ENCODE measurements at regions of chr17 and their contacts with region 1.

Region 1: DNA sequence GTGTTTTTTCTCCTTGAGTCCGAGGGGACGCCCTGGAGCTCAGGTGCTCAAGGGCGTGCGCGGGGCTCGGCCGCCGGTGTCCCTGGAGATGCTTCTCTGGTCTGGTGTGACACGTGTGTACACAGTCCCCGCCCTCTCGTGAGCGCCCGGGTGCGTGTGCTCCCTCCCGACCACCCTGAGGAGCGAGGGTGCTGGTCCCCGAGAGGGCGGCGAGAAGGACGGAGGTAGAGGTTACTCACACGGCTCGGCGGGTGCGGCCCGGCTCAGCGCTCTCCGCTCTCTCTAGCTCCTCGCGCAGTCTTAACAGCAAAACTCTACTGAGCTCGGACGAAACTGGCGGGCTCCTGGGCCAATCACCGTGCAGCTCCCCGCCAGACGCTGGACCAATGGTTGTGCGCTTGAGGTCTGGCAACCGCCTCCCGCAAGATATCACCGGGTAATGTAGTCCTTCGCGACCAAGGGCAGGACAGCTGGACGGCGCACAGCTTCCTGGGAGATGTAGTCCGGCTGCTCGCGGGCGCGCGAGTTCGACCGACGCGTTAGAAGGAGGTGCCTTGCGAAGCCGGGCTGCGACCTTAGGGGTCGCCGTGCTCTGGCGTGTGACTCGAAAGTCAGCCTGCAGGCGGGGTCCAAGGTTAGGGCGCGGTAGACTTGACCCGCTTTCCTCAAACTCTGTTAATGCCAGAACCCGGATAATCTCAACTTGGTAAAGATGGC is at the start of gene SLC25A19:
- DNase-seq: peak; percentile 90 to 99 (median 96)
- ATAC-seq: peak; percentile 88
- H3K4me3 ChIP-seq: peak within 1 kb of the TSS; percentile 70 to 77
- H3K4me3 Mint-ChIP-seq: peak within 1 kb of the TSS; percentile 97
- H3K27ac ChIP-seq: peak within 1 kb of the TSS; percentile 95 to 97
- H3K27ac Mint-ChIP-seq: peak within 1 kb of the TSS; percentile 100
- H3K4me1 ChIP-seq: peaks cover 16% of the 10 kb centered on the region
- H3K4me1 Mint-ChIP-seq: peaks cover 16% of the 10 kb centered on the region
- H3K27me3 ChIP-seq: no peaks in the 10 kb centered on the region
- H3K27me3 Mint-ChIP-seq: no peaks in the 10 kb centered on the region
- CTCF ChIP-seq: no peak
- total RNA-seq, gene SLC25A19: 14.4 to 14.8 TPM

Region 2: DNA sequence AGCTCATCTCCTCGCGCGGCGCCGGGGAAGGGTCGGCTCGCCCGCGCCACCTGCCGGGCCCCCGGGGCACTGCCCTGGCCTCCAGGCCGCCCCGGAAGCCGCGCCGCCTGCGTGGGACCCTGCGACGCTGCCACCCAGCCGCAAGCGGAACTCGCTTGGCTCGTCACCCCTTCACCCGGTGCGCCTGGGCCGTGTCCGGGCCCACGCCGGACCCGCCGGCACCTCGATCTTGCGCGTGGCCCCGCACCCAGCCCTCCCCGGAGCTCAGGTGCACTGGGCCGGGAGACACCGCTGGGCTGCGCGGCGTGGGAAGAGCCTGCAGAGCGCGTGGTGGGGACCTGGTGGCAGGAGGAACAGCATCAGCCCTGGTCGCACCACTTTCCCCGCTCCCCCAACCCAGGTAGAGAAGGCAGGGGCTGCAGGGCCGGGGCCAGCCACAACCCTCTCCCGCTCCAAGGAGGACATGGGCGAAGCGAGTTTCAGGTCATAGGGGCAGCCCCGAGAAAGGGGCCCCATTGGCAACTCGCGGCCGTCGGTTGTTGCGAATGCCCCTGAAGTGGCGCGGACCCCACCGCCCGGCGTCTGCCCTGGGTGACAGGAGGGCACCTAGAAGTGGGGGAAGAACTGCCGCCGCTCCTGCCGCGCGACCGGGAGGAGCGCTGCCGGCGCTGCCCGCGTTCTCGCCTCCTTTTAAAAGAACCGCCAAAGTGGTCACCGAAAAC is 17.9 kb before region 1 on chr17:
- CTCF ChIA-PET with region 1: interaction called, 11 read pairs
- POLR2A ChIA-PET with region 1: interaction called, 70 read pairs
- intact Hi-C with region 1: loop called (anchors 1 kb)
- DNase-seq: peak; percentile 75 to 94 (median 88)
- ATAC-seq: peak; percentile 92
- H3K4me3 ChIP-seq: peak overlapping the region; percentile 84 to 93
- H3K4me3 Mint-ChIP-seq: peak overlapping the region; percentile 81
- H3K27ac ChIP-seq: peak overlapping the region; percentile 82 to 91
- H3K27ac Mint-ChIP-seq: peak overlapping the region; percentile 84
- H3K4me1 ChIP-seq: peaks cover 18% of the 10 kb centered on the region
- H3K4me1 Mint-ChIP-seq: peaks cover 25% of the 10 kb centered on the region
- H3K27me3 ChIP-seq: no peaks in the 10 kb centered on the region
- H3K27me3 Mint-ChIP-seq: no peaks in the 10 kb centered on the region
- CTCF ChIP-seq: peak; percentile 65

Region 3: GRCh38 chr17:75412455-75413317 is 123.4 kb after region 1 on chr17:
- CTCF ChIA-PET with region 1: interaction called, 13 read pairs
- POLR2A ChIA-PET with region 1: interaction called, 14 read pairs
- intact Hi-C with region 1: loop called (anchors 1 kb)
- DNase-seq: peak; percentile 49 to 88 (median 73)
- ATAC-seq: peak; percentile 90
- H3K4me3 ChIP-seq: peak overlapping the region in 1 of 2 experiments; percentile 22
- H3K4me3 Mint-ChIP-seq: peak overlapping the region; percentile 72
- H3K27ac ChIP-seq: no peak overlapping the region
- H3K27ac Mint-ChIP-seq: peak overlapping the region; percentile 62
- H3K4me1 ChIP-seq: peaks cover 8% of the 10 kb centered on the region
- H3K4me1 Mint-ChIP-seq: peaks cover 16% of the 10 kb centered on the region
- H3K27me3 ChIP-seq: no peaks in the 10 kb centered on the region
- H3K27me3 Mint-ChIP-seq: no peaks in the 10 kb centered on the region
- CTCF ChIP-seq: peak; percentile 70

Region 4: GRCh38 chr17:75515496-75516254 is 226.4 kb after region 1 on chr17 and contains the start of gene CASKIN2:
- CTCF ChIA-PET with region 1: no interaction called
- POLR2A ChIA-PET with region 1: no interaction called
- intact Hi-C with region 1: loop called in 1 of 2 experiments (anchors 2 kb)
- DNase-seq: peak; percentile 56 to 89 (median 80)
- ATAC-seq: peak; percentile 59
- H3K4me3 ChIP-seq: peak within 1 kb of the TSS; percentile 79 to 97
- H3K4me3 Mint-ChIP-seq: peak within 1 kb of the TSS; percentile 77
- H3K27ac ChIP-seq: peak within 1 kb of the TSS in 1 of 2 experiments; percentile 32
- H3K27ac Mint-ChIP-seq: no peak within 1 kb of the TSS
- H3K4me1 ChIP-seq: peaks cover 35% of the 10 kb centered on the region
- H3K4me1 Mint-ChIP-seq: peaks cover 26% of the 10 kb centered on the region
- H3K27me3 ChIP-seq: no peaks in the 10 kb centered on the region
- H3K27me3 Mint-ChIP-seq: no peaks in the 10 kb centered on the region
- CTCF ChIP-seq: peak; percentile 99
- total RNA-seq, gene CASKIN2: 0.64 to 0.98 TPM

Region 5: GRCh38 chr17:75589012-75589918 is 300.0 kb after region 1 on chr17:
- CTCF ChIA-PET with region 1: no interaction called
- POLR2A ChIA-PET with region 1: no interaction called
- intact Hi-C with region 1: loop called in 1 of 2 experiments (anchors 1 kb)
- DNase-seq: peak; percentile 90 to 99 (median 95)
- ATAC-seq: peak; percentile 85
- H3K4me3 ChIP-seq: peak overlapping the region; percentile 59 to 74
- H3K4me3 Mint-ChIP-seq: peak overlapping the region; percentile 77
- H3K27ac ChIP-seq: peak overlapping the region; percentile 48 to 52
- H3K27ac Mint-ChIP-seq: peak overlapping the region; percentile 70
- H3K4me1 ChIP-seq: peaks cover 15% of the 10 kb centered on the region
- H3K4me1 Mint-ChIP-seq: peaks cover 15% of the 10 kb centered on the region
- H3K27me3 ChIP-seq: no peaks in the 10 kb centered on the region
- H3K27me3 Mint-ChIP-seq: no peaks in the 10 kb centered on the region
- CTCF ChIP-seq: peak; percentile 61